ENCODE measurements at regions of chr5 and their contacts with region 1.

Region 1: GRCh38 chr5:140346348-140347101 is at the start of gene HBEGF:
- DNase-seq: peak; percentile 63
- ATAC-seq: peak; percentile 83
- H3K4me3 ChIP-seq: peak within 1 kb of the TSS; percentile 62 to 81 (median 81)
- H3K27ac ChIP-seq: no peak within 1 kb of the TSS
- H3K4me1 ChIP-seq: peaks cover 66% of the 10 kb centered on the region
- H3K27me3 ChIP-seq: 0 out of 5 replicates have a peak, but pooled peaks cover 0 to 7% of the 10 kb centered on the region in 2 experiments
- CTCF ChIP-seq: peak; percentile 58
- EP300 ChIP-seq: no peak
- POLR2A ChIP-seq: peak; percentile 63 to 85
- RAD21 ChIP-seq: 0 out of 2 replicates have a peak, but pooled peaks have one; percentile 32
- total RNA-seq, gene HBEGF: 0.77 and 1.7 TPM in 2 replicates

Region 2: DNA sequence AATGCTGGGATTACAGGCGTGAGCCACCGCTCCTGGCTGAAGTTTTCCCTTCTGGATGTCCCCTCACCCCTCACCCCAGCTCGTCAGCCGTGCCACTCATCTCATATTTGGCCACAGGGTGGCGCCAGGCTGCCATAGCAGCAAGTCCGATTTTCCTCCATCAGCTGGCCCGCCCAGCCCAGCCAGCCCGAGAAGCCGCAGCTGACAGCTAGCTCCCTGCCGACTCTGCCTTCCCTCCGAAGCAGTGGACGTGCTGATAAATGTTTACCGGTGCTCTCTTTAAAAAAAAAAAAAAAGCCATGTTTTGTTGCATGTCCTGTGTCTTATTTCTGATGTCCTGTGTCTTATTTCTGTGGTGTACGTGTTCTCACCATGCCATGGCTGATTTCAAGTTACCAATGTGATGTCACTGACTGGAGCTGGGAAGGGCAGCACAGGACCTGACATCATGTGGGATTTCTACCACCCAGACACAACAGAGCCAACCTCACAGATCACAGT is 102.0 kb before region 1 on chr5:
- CTCF ChIA-PET with region 1: interaction called, 17 read pairs
- POLR2A ChIA-PET with region 1: interaction called, 11 read pairs
- in situ Hi-C with region 1: no loop called
- intact Hi-C with region 1: loop called (anchors 1 kb)
- DNase-seq: peak; percentile 74
- ATAC-seq: peak; percentile 63
- H3K4me3 ChIP-seq: no peak overlapping the region
- H3K27ac ChIP-seq: no peak overlapping the region
- H3K4me1 ChIP-seq: peaks cover 23% of the 10 kb centered on the region
- H3K27me3 ChIP-seq: no peaks in the 10 kb centered on the region
- CTCF ChIP-seq: peak; percentile 93
- EP300 ChIP-seq: no peak
- POLR2A ChIP-seq: no peak
- RAD21 ChIP-seq: peak; percentile 97

Region 3: GRCh38 chr5:140282266-140282665 is 64.3 kb before region 1 on chr5:
- CTCF ChIA-PET with region 1: no interaction called
- POLR2A ChIA-PET with region 1: no interaction called
- in situ Hi-C with region 1: no loop called
- intact Hi-C with region 1: no loop called
- DNase-seq: no peak
- ATAC-seq: no peak
- H3K4me3 ChIP-seq: no peak overlapping the region
- H3K27ac ChIP-seq: no peak overlapping the region
- H3K4me1 ChIP-seq: peaks cover 15% of the 10 kb centered on the region; the same call in 1 of the 2 replicates
- H3K27me3 ChIP-seq: no peaks in the 10 kb centered on the region
- CTCF ChIP-seq: no peak
- EP300 ChIP-seq: no peak
- POLR2A ChIP-seq: no peak
- RAD21 ChIP-seq: no peak

Region 4: GRCh38 chr5:140293091-140293848 is 53.3 kb before region 1 on chr5:
- CTCF ChIA-PET with region 1: no interaction called
- POLR2A ChIA-PET with region 1: interaction called, 9 read pairs
- in situ Hi-C with region 1: no loop called
- intact Hi-C with region 1: loop called (anchors 5 kb)
- DNase-seq: peak; percentile 65
- ATAC-seq: peak; percentile 72
- H3K4me3 ChIP-seq: peak overlapping the region; percentile 5 to 44 (median 23); a peak in 3 of 6 replicates
- H3K27ac ChIP-seq: peak overlapping the region; percentile 87
- H3K4me1 ChIP-seq: peaks cover 88% of the 10 kb centered on the region
- H3K27me3 ChIP-seq: no peaks in the 10 kb centered on the region; a peak in 1 of 5 replicates
- CTCF ChIP-seq: no peak
- EP300 ChIP-seq: peak in 1 of 2 experiments; percentile 71; a peak in 2 of 4 replicates
- POLR2A ChIP-seq: no peak
- RAD21 ChIP-seq: no peak

Region 5: GRCh38 chr5:140327589-140327988 is 18.9 kb before region 1 on chr5:
- CTCF ChIA-PET with region 1: no interaction called
- POLR2A ChIA-PET with region 1: interaction called, 19 read pairs
- in situ Hi-C with region 1: no loop called
- intact Hi-C with region 1: loop called (anchors 1 kb)
- DNase-seq: peak; percentile 79
- ATAC-seq: peak; percentile 18
- H3K4me3 ChIP-seq: no peak overlapping the region; a peak in 1 of 6 replicates
- H3K27ac ChIP-seq: no peak overlapping the region
- H3K4me1 ChIP-seq: peaks cover 76% of the 10 kb centered on the region
- H3K27me3 ChIP-seq: no peaks in the 10 kb centered on the region
- CTCF ChIP-seq: no peak
- EP300 ChIP-seq: no peak
- POLR2A ChIP-seq: no peak
- RAD21 ChIP-seq: no peak

Region 6: GRCh38 chr5:140357726-140358093 is 11.2 kb after region 1 on chr5:
- CTCF ChIA-PET with region 1: interaction called, 5 read pairs
- POLR2A ChIA-PET with region 1: interaction called, 17 read pairs
- in situ Hi-C with region 1: no loop called
- intact Hi-C with region 1: no loop called
- DNase-seq: peak; percentile 77
- ATAC-seq: peak; percentile 93
- H3K4me3 ChIP-seq: peak overlapping the region; percentile 43 to 58 (median 51)
- H3K27ac ChIP-seq: no peak overlapping the region
- H3K4me1 ChIP-seq: peaks cover 37% of the 10 kb centered on the region
- H3K27me3 ChIP-seq: no peaks in the 10 kb centered on the region
- CTCF ChIP-seq: peak; percentile 93
- EP300 ChIP-seq: no peak
- POLR2A ChIP-seq: no peak
- RAD21 ChIP-seq: peak; percentile 91

Region 7: GRCh38 chr5:140591747-140592372 is 245.3 kb after region 1 on chr5:
- CTCF ChIA-PET with region 1: no interaction called
- POLR2A ChIA-PET with region 1: no interaction called
- in situ Hi-C with region 1: no loop called
- intact Hi-C with region 1: no loop called
- DNase-seq: no peak
- ATAC-seq: peak; percentile 60
- H3K4me3 ChIP-seq: no peak overlapping the region
- H3K27ac ChIP-seq: no peak overlapping the region
- H3K4me1 ChIP-seq: peaks cover 13% of the 10 kb centered on the region
- H3K27me3 ChIP-seq: no peaks in the 10 kb centered on the region; a peak in 1 of 5 replicates
- CTCF ChIP-seq: no peak
- EP300 ChIP-seq: no peak
- POLR2A ChIP-seq: no peak
- RAD21 ChIP-seq: no peak